HCT116 (cell line): ENCODE measurements at regions of chr21 and their contacts with region 1.

Region 1: DNA sequence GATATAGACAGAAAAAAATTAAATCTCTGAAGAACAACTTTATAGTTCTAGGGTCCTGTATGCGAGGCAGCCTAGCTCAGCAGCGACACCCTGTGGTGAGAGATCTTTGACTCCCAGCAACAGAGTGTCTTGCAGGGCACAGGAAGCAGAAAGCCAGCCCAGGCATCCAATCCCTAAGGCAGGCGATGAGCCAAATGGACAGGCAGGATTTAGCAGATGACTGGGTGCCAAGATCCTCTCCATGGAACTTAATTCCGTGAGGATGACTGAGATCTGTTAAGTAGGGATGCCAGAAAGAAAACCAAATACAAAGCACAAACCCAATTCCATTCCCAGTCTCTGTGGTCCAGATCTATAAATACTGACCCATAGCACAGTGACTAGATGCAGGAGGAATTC is 38.8 kb downstream of the HLCS start:
- DNase-seq: peak; percentile 56
- ATAC-seq: peak; percentile 98
- H3K4me3 ChIP-seq: no peak overlapping the region
- H3K27ac ChIP-seq: no peak overlapping the region
- H3K4me1 ChIP-seq: peaks cover 0 to 4% of the 10 kb centered on the region in 2 experiments; a peak in 1 of 4 replicates
- H3K27me3 ChIP-seq: no peaks in the 10 kb centered on the region
- CTCF ChIP-seq: peak; percentile 81 to 96 (median 89)
- POLR2A ChIP-seq: no peak
- RAD21 ChIP-seq: peak; percentile 78

Region 2: DNA sequence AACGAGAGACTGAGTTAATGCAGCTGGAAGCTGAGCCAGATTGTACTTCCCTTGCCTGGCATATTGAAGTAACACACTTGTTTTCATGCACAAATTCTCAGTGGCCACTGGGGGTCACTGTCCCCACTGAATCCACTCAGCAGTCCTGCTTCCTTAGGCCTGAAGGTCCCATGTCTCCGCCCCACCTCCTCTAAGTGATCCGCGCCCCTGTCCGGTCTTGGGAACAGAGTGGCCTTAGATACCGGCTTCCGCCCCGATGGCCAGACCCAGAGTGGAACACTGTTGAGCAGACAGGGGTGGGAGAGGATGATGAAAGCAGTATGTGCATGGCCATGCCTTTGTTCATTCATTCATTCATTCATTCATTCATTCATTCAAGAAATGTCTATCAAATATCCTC is 507.7 kb before region 1 on chr21:
- CTCF ChIA-PET with region 1: no interaction called
- POLR2A ChIA-PET with region 1: no interaction called
- RAD21 ChIA-PET with region 1: no interaction called
- intact Hi-C with region 1: loop called (anchors 5 kb)
- DNase-seq: peak; percentile 77
- ATAC-seq: peak; percentile 90
- H3K4me3 ChIP-seq: no peak overlapping the region
- H3K27ac ChIP-seq: no peak overlapping the region
- H3K4me1 ChIP-seq: 0 out of 4 replicates have a peak, but pooled peaks cover 0 to 2% of the 10 kb centered on the region in 2 experiments
- H3K27me3 ChIP-seq: no peaks in the 10 kb centered on the region
- CTCF ChIP-seq: peak; percentile 45 to 81 (median 78); a peak in 5 of 6 replicates
- POLR2A ChIP-seq: no peak
- RAD21 ChIP-seq: peak; percentile 77

Region 3: GRCh38 chr21:36504067-36505058 is 423.4 kb before region 1 on chr21:
- CTCF ChIA-PET with region 1: interaction called, 3 read pairs
- POLR2A ChIA-PET with region 1: no interaction called
- RAD21 ChIA-PET with region 1: no interaction called
- intact Hi-C with region 1: loop called (anchors 1 kb)
- DNase-seq: peak; percentile 34
- ATAC-seq: peak; percentile 22; the same call in 1 of the 2 replicates
- H3K4me3 ChIP-seq: no peak overlapping the region
- H3K27ac ChIP-seq: no peak overlapping the region
- H3K4me1 ChIP-seq: no peaks in the 10 kb centered on the region; a peak in 1 of 4 replicates
- H3K27me3 ChIP-seq: no peaks in the 10 kb centered on the region
- CTCF ChIP-seq: peak; percentile 53 to 84 (median 80); a peak in 5 of 6 replicates
- POLR2A ChIP-seq: no peak
- RAD21 ChIP-seq: peak; percentile 77

Region 4: GRCh38 chr21:36661511-36662309 is 266.0 kb before region 1 on chr21:
- CTCF ChIA-PET with region 1: interaction called, 7 read pairs
- POLR2A ChIA-PET with region 1: no interaction called
- RAD21 ChIA-PET with region 1: interaction called in 1 of 2 experiments, 5 read pairs
- intact Hi-C with region 1: loop called (anchors 1 kb)
- DNase-seq: peak; percentile 24
- ATAC-seq: peak; percentile 89
- H3K4me3 ChIP-seq: no peak overlapping the region
- H3K27ac ChIP-seq: no peak overlapping the region
- H3K4me1 ChIP-seq: peaks cover 0 to 8% of the 10 kb centered on the region in 2 experiments; a peak in 3 of 4 replicates
- H3K27me3 ChIP-seq: no peaks in the 10 kb centered on the region
- CTCF ChIP-seq: peak; percentile 64 to 68 (median 66); a peak in 5 of 6 replicates
- POLR2A ChIP-seq: no peak
- RAD21 ChIP-seq: peak; percentile 79

Region 5: GRCh38 chr21:36749935-36750578 is 177.7 kb before region 1 on chr21:
- CTCF ChIA-PET with region 1: no interaction called
- POLR2A ChIA-PET with region 1: no interaction called
- RAD21 ChIA-PET with region 1: no interaction called
- intact Hi-C with region 1: loop called (anchors 10 kb)
- DNase-seq: no peak
- ATAC-seq: no peak; the same call in 1 of the 2 replicates
- H3K4me3 ChIP-seq: no peak overlapping the region
- H3K27ac ChIP-seq: no peak overlapping the region
- H3K4me1 ChIP-seq: no peaks in the 10 kb centered on the region; a peak in 1 of 4 replicates
- H3K27me3 ChIP-seq: no peaks in the 10 kb centered on the region
- CTCF ChIP-seq: no peak
- POLR2A ChIP-seq: no peak
- RAD21 ChIP-seq: no peak

Region 6: GRCh38 chr21:37974081-37974480 is 1046.4 kb after region 1 on chr21:
- CTCF ChIA-PET with region 1: no interaction called
- POLR2A ChIA-PET with region 1: no interaction called
- RAD21 ChIA-PET with region 1: no interaction called
- intact Hi-C with region 1: no loop called
- DNase-seq: no peak
- ATAC-seq: no peak
- H3K4me3 ChIP-seq: no peak overlapping the region
- H3K27ac ChIP-seq: no peak overlapping the region
- H3K4me1 ChIP-seq: no peaks in the 10 kb centered on the region
- H3K27me3 ChIP-seq: no peaks in the 10 kb centered on the region
- CTCF ChIP-seq: no peak
- POLR2A ChIP-seq: no peak
- RAD21 ChIP-seq: no peak